ENCODE measurements at regions of chr11 and their contacts with region 1.

Region 1: DNA sequence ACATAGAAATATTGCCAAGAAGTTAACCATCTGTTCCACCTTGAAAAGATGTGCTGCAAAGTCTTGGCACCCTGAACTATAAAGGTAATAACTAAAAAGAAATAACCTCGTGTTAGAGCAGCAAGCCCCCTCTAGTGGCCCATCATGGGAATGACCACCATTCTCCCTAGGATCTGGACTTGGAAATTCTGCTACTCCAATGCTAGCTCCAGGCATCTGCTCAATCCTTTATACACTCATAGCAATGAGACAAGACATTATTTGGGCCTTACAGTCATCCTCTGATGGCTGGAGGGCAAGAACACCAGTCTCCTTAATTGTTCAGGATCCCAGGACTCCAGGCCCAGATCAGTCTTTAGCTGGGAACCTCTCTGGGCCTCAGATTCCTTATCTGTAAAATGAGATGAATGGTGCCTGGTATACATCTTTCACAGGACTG is 76.0 kb downstream of the CWC15 start:
- DNase-seq: peak; percentile 47
- ATAC-seq: peak; percentile 57
- H3K4me3 ChIP-seq: no peak overlapping the region
- H3K4me3 Mint-ChIP-seq: no peak overlapping the region
- H3K27ac ChIP-seq: no peak overlapping the region
- H3K27ac Mint-ChIP-seq: no peak overlapping the region
- H3K4me1 ChIP-seq: no peaks in the 10 kb centered on the region
- H3K4me1 Mint-ChIP-seq: no peaks in the 10 kb centered on the region
- H3K27me3 ChIP-seq: no peaks in the 10 kb centered on the region
- H3K27me3 Mint-ChIP-seq: no peaks in the 10 kb centered on the region
- CTCF ChIP-seq: peak; percentile 97

Region 2: DNA sequence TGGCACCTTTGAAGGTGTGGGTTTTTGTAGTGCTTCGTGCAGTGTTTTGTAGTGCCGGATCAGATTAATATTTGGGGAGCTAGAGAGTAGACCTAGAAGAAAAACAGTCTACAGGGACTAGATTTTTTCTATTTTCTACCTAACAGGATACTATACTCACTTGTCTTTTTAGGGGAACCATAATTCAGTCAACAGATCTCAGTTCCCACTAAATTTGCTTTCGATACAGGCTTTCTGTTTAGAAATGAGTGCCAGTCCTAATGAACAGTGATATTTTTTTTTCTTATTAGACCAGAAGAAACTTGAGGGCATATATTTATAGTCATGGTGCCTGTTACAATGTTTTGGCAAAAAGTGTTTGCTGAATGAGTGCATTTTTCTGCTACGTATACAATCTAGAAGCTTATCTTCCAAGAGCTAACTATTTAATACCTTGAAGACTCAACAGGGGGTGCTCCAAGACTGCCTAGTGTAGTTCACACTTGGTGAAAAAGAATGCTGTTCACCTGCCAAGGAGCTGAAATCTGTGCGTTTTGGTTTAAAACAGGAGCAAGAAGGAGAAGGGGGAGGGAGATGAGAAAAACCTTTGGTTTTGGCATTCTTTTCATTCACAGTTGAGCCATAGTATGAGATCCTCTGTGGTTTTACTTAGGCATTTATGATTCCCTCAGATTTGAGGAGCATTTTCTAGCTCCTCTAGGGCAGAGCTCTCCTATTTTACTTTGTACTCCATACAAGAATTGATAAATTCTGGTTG is 1002.1 kb before region 1 on chr11:
- CTCF ChIA-PET with region 1: interaction called, 10 read pairs
- POLR2A ChIA-PET with region 1: no interaction called
- intact Hi-C with region 1: loop called (anchors 10 kb)
- DNase-seq: peak; percentile 44
- ATAC-seq: no peak
- H3K4me3 ChIP-seq: no peak overlapping the region
- H3K4me3 Mint-ChIP-seq: no peak overlapping the region
- H3K27ac ChIP-seq: no peak overlapping the region
- H3K27ac Mint-ChIP-seq: no peak overlapping the region
- H3K4me1 ChIP-seq: no peaks in the 10 kb centered on the region
- H3K4me1 Mint-ChIP-seq: no peaks in the 10 kb centered on the region
- H3K27me3 ChIP-seq: peaks cover 0 to 7% (median 5%) of the 10 kb centered on the region in 4 experiments
- H3K27me3 Mint-ChIP-seq: peaks cover 37% of the 10 kb centered on the region
- CTCF ChIP-seq: peak; percentile 57

Region 3: DNA sequence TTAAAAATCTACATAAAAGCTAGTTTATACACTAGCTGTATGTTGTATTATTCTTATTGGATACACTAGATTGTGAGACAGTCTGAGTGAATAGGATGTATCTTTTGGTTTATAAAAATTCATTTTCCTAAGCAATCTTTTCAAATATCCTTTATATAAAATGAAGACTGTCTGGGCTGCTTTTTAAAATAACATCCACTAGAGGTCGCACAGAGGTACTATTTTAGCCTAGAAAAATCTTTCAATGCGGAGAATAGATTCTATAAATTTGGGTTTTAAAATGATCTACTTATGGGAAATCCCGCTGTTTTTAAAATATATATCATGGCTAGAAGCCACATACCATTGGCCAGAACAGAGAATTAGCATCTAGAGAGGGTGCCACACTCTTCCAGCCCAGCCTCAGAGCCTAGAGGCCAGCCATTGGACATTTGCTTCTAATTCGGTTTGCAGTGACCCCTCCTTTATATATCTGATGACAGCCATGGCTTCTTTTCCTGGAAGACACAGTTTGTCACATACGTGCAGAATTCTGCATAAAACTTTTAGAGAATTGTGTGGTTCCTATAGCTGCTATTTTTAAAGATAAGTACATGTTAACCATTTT is 377.8 kb before region 1 on chr11:
- CTCF ChIA-PET with region 1: interaction called, 16 read pairs
- POLR2A ChIA-PET with region 1: no interaction called
- intact Hi-C with region 1: loop called (anchors 1 kb)
- DNase-seq: peak; percentile 48
- ATAC-seq: no peak
- H3K4me3 ChIP-seq: no peak overlapping the region
- H3K4me3 Mint-ChIP-seq: no peak overlapping the region
- H3K27ac ChIP-seq: no peak overlapping the region
- H3K27ac Mint-ChIP-seq: no peak overlapping the region
- H3K4me1 ChIP-seq: no peaks in the 10 kb centered on the region
- H3K4me1 Mint-ChIP-seq: no peaks in the 10 kb centered on the region
- H3K27me3 ChIP-seq: peaks cover 0 to 4% (median 2%) of the 10 kb centered on the region in 4 experiments
- H3K27me3 Mint-ChIP-seq: peaks cover 27% of the 10 kb centered on the region
- CTCF ChIP-seq: peak; percentile 83

Region 4: GRCh38 chr11:94623120-94623735 is 274.1 kb before region 1 on chr11:
- CTCF ChIA-PET with region 1: interaction called, 6 read pairs
- POLR2A ChIA-PET with region 1: no interaction called
- intact Hi-C with region 1: loop called (anchors 1 kb)
- DNase-seq: peak; percentile 49
- ATAC-seq: peak; percentile 47
- H3K4me3 ChIP-seq: no peak overlapping the region
- H3K4me3 Mint-ChIP-seq: no peak overlapping the region
- H3K27ac ChIP-seq: no peak overlapping the region
- H3K27ac Mint-ChIP-seq: no peak overlapping the region
- H3K4me1 ChIP-seq: no peaks in the 10 kb centered on the region
- H3K4me1 Mint-ChIP-seq: no peaks in the 10 kb centered on the region
- H3K27me3 ChIP-seq: peaks cover 0 to 6% (median 0%) of the 10 kb centered on the region in 4 experiments
- H3K27me3 Mint-ChIP-seq: peaks cover 18% of the 10 kb centered on the region
- CTCF ChIP-seq: peak; percentile 34

Region 5: DNA sequence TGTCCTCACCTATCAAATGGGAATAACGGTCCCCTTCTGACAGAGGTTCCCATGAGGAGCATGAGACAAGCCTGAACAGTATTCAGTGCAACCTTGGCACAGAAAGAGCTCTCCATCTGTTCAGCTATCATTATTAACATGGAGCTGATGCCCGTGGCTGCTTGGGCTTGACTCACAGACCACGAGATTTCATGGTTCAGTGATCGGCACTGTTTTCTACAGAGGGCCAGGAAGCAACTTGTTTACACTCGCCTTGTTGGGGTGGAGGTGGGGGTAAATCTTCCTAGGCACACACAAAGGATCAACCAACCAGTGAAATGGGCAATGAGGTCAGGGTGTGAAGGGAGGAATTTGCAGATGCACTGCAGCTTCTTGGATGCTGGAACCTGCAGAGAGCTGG is 12.2 kb before region 1 on chr11:
- CTCF ChIA-PET with region 1: interaction called, 12 read pairs
- POLR2A ChIA-PET with region 1: no interaction called
- intact Hi-C with region 1: no loop called
- DNase-seq: no peak
- ATAC-seq: peak; percentile 17
- H3K4me3 ChIP-seq: no peak overlapping the region
- H3K4me3 Mint-ChIP-seq: no peak overlapping the region
- H3K27ac ChIP-seq: no peak overlapping the region
- H3K27ac Mint-ChIP-seq: no peak overlapping the region
- H3K4me1 ChIP-seq: peaks cover 3 to 5% of the 10 kb centered on the region in 2 donors
- H3K4me1 Mint-ChIP-seq: peaks cover 8% of the 10 kb centered on the region
- H3K27me3 ChIP-seq: no peaks in the 10 kb centered on the region
- H3K27me3 Mint-ChIP-seq: peaks cover 7% of the 10 kb centered on the region
- CTCF ChIP-seq: no peak

Region 6: DNA sequence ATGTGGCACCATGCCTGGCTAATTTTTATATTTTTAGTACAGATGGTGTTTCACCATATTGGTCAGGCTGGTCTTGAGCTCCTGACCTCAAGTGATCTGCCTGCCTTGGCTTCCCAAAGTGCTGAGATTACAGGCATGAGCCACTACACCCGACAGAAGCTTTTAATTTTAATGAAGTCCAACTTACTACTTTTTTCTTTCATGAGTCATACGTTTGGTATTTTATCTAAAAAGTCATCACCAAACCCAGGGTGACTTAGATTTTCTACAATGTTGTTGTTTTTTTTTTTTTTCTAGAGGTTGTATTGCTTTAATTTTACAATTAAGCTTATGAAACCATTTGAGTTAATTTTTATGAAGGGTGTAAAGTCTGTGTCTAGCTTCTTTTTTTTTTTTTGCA is 1527.3 kb after region 1 on chr11:
- CTCF ChIA-PET with region 1: interaction called, 4 read pairs
- POLR2A ChIA-PET with region 1: no interaction called
- intact Hi-C with region 1: loop called (anchors 5 kb)
- DNase-seq: no peak
- ATAC-seq: no peak
- H3K4me3 ChIP-seq: no peak overlapping the region
- H3K4me3 Mint-ChIP-seq: no peak overlapping the region
- H3K27ac ChIP-seq: no peak overlapping the region
- H3K27ac Mint-ChIP-seq: no peak overlapping the region
- H3K4me1 ChIP-seq: no peaks in the 10 kb centered on the region
- H3K4me1 Mint-ChIP-seq: no peaks in the 10 kb centered on the region
- H3K27me3 ChIP-seq: peaks cover 0 to 12% (median 0%) of the 10 kb centered on the region in 4 experiments
- H3K27me3 Mint-ChIP-seq: peaks cover 23% of the 10 kb centered on the region
- CTCF ChIP-seq: no peak

Measured in B cell (primary cell).